Naive thymus-derived CD4-positive, alpha-beta T cell (primary cell): ENCODE measurements at regions of chr1 and their contacts with region 1.

Region 1: DNA sequence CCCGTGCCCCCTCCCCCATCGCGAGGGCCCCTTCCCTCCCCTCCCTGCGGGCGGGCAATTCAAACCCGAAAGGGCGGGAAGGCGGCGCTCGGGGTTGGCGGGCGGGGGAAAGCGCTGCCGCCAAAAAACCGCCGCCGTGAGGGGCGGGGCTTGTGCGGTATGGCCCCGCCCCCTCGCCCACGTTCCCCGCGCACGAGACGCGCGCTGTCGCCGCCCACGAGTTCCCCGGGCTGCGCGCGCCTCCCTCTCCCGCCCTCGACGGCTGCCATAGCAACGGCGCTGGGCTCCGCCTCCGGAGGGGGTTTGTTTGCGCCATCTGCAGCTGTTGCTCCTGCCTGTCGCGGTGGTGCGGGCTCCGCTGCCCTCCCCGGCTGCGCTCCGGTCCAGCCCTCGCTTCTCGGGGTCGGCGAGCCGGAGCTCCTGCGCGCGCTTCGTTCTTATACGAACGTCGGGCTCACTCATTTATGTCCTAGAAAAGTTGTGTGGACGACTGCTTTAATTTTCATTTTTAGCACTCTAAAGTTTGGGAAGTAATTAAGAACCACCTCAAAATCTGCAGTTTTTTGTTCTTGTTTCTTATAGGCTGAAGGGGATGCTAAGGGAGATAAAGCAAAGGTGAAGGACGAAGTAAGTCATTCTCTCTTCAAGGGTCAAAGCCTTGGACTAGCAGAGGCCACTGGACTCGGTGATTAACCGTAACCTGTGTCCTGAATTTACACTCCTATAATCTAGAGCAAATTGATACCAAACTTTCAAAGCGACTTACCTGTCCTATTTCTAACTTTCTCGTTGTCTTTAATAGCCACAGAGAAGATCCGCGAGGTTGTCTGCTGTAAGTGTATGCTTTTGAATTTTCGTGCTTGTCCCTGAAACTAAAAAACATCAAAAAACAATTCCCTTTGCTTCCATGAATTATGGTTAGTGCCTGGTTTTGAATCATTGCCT is 933 bp downstream of the HMGN2 start:
- DNase-seq: peak; percentile 92 to 97 (median 95)
- ATAC-seq: peak; percentile 90
- H3K4me3 ChIP-seq: peak overlapping the region; percentile 72
- H3K4me3 Mint-ChIP-seq: peak overlapping the region; percentile 85 to 100 (median 88)
- H3K27ac ChIP-seq: peak overlapping the region; percentile 100
- H3K27ac Mint-ChIP-seq: peak overlapping the region; percentile 60 to 97 (median 87)
- H3K4me1 ChIP-seq: peaks cover 30 to 35% of the 10 kb centered on the region in 2 donors
- H3K4me1 Mint-ChIP-seq: peaks cover 28 to 62% (median 59%) of the 10 kb centered on the region in 7 donors
- H3K27me3 ChIP-seq: no peaks in the 10 kb centered on the region
- H3K27me3 Mint-ChIP-seq: peaks cover 0 to 2% (median 0%) of the 10 kb centered on the region in 5 donors

Region 2: GRCh38 chr1:25616095-25616986 is 856.8 kb before region 1 on chr1 and contains the start of gene MAN1C1:
- CTCF ChIA-PET with region 1: no interaction called
- POLR2A ChIA-PET with region 1: no interaction called
- intact Hi-C with region 1: loop called in 1 of 2 experiments (anchors 5 kb)
- DNase-seq: peak; percentile 71 to 89 (median 85)
- ATAC-seq: peak; percentile 91
- H3K4me3 ChIP-seq: peak within 1 kb of the TSS; percentile 76
- H3K4me3 Mint-ChIP-seq: peak within 1 kb of the TSS; percentile 78 to 99 (median 86)
- H3K27ac ChIP-seq: peak within 1 kb of the TSS; percentile 84
- H3K27ac Mint-ChIP-seq: peak within 1 kb of the TSS; percentile 67 to 93 (median 86)
- H3K4me1 ChIP-seq: peaks cover 13 to 37% of the 10 kb centered on the region in 2 donors
- H3K4me1 Mint-ChIP-seq: peaks cover 36 to 52% (median 45%) of the 10 kb centered on the region in 7 donors
- H3K27me3 ChIP-seq: no peaks in the 10 kb centered on the region
- H3K27me3 Mint-ChIP-seq: peaks cover 0 to 72% (median 0%) of the 10 kb centered on the region in 5 donors
- total RNA-seq, gene MAN1C1: 28.8 to 85.5 (median 69.9) TPM

Region 3: GRCh38 chr1:26279456-26280332 is 193.5 kb before region 1 on chr1 and contains the start of gene SH3BGRL3:
- CTCF ChIA-PET with region 1: no interaction called
- POLR2A ChIA-PET with region 1: interaction called, 6 read pairs
- intact Hi-C with region 1: loop called (anchors 1 to 2 kb)
- DNase-seq: peak; percentile 73 to 89 (median 84)
- ATAC-seq: peak; percentile 77
- H3K4me3 ChIP-seq: peak within 1 kb of the TSS; percentile 58
- H3K4me3 Mint-ChIP-seq: peak within 1 kb of the TSS; percentile 80 to 98 (median 89)
- H3K27ac ChIP-seq: peak within 1 kb of the TSS; percentile 86
- H3K27ac Mint-ChIP-seq: peak within 1 kb of the TSS; percentile 83 to 99 (median 93)
- H3K4me1 ChIP-seq: peaks cover 80 to 82% of the 10 kb centered on the region in 2 donors
- H3K4me1 Mint-ChIP-seq: peaks cover 60 to 85% (median 71%) of the 10 kb centered on the region in 7 donors
- H3K27me3 ChIP-seq: no peaks in the 10 kb centered on the region
- H3K27me3 Mint-ChIP-seq: no peaks in the 10 kb centered on the region
- total RNA-seq, gene SH3BGRL3: 156 to 636 (median 224) TPM

Region 4: GRCh38 chr1:26378088-26378878 is 94.9 kb before region 1 on chr1:
- CTCF ChIA-PET with region 1: no interaction called
- POLR2A ChIA-PET with region 1: no interaction called
- intact Hi-C with region 1: loop called in 1 of 2 experiments (anchors 5 kb)
- DNase-seq: peak; percentile 47 to 77 (median 70)
- ATAC-seq: peak; percentile 98
- H3K4me3 ChIP-seq: peak overlapping the region; percentile 35
- H3K4me3 Mint-ChIP-seq: peak overlapping the region; percentile 64 to 85 (median 74)
- H3K27ac ChIP-seq: peak overlapping the region; percentile 56
- H3K27ac Mint-ChIP-seq: peak overlapping the region; percentile 48 to 93 (median 92)
- H3K4me1 ChIP-seq: peaks cover 57 to 64% of the 10 kb centered on the region in 2 donors
- H3K4me1 Mint-ChIP-seq: peaks cover 57 to 74% (median 70%) of the 10 kb centered on the region in 7 donors
- H3K27me3 ChIP-seq: no peaks in the 10 kb centered on the region
- H3K27me3 Mint-ChIP-seq: no peaks in the 10 kb centered on the region

Region 5: DNA sequence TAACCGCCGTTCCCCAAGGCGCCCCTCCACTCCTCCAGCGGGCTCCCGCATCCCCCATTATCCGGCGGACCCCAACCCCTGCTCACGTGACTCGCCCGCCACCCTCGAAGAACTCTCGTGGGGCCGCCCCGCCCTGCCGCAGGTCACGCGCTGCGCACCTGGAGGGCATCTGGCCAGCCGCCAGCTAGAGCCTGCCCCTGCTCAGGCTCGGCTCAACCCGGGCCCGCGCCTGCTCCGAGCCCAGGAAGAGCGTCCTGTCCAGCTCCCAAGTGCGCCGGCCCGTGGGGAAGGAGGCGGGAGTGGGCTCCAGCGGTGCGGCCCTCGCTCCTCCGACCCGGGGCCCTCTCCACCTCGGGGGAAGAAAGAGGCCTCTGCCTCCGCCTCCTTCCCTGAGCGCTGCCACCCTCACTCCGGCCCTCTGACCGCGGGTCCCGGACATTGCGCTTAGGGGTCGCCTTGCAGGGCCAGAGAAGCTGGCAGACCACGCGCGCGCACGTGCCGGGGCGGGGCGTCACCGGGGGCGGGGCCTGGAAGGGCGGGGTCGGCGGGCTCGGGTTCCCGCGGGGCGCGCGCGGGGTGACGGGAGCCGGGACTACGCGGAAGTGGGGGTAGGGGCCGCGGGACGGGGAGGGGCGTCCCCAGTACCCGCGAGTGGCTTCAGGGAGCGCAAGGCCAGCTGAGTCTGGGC is 27.5 kb after region 1 on chr1:
- CTCF ChIA-PET with region 1: interaction called, 4 read pairs
- POLR2A ChIA-PET with region 1: interaction called, 40 read pairs
- intact Hi-C with region 1: loop called (anchors 1 kb)
- DNase-seq: peak; percentile 76 to 97 (median 86)
- ATAC-seq: peak; percentile 89
- H3K4me3 ChIP-seq: peak overlapping the region; percentile 95
- H3K4me3 Mint-ChIP-seq: peak overlapping the region; percentile 67 to 91 (median 88)
- H3K27ac ChIP-seq: peak overlapping the region; percentile 90
- H3K27ac Mint-ChIP-seq: peak overlapping the region; percentile 67 to 95 (median 91)
- H3K4me1 ChIP-seq: peaks cover 16% of the 10 kb centered on the region in 2 donors
- H3K4me1 Mint-ChIP-seq: peaks cover 1 to 31% (median 11%) of the 10 kb centered on the region in 7 donors
- H3K27me3 ChIP-seq: no peaks in the 10 kb centered on the region
- H3K27me3 Mint-ChIP-seq: no peaks in the 10 kb centered on the region

Region 6: DNA sequence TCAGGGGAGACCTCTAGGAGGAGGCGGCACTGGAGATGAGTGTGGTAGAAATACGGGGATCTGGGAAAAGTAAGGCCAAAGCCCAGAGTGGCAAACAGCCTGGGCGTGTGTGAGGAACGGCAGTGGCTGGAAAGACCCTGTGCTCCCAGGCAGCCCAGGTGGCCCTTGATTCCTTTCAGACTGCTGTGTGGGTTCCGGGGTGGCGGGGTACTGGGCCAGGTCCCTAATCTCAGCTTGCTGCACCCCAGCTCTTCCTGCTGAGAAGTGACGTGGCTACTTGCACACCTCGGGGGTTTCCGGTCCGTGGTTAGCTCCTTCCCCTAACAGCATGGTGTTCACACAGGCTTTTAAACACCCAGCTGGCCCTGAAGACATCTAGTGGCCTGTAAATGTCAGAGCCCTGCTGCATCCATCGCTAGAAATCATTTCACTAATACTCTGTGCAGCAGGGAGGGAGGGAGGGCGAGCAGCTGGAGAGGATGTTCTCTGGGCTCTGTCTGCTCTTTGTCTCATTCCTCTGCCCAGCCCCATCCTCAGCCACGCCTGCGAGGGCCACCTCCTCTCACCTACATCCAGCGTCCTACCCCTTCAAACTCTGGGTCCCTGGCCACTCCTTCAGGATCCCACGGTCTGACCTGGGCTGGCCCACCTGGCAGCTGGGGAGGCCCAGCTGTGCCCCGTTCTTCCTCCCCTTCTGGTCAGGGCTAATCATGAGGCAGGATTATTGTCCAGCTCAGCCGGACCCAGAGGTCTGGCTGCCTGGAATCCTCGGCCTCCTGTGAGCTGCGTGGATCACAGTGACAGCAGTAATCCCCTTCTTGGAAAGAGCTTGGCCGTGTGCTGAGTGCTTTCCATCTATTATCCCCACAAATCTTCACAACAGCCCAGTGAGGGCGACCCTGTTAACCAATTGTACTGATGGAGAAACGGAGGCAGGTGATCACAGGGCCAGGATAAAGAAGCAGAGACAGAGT is 360.5 kb after region 1 on chr1:
- CTCF ChIA-PET with region 1: no interaction called
- POLR2A ChIA-PET with region 1: interaction called, 3 read pairs
- intact Hi-C with region 1: loop called in 1 of 2 experiments (anchors 2 kb)
- DNase-seq: peak; percentile 59 to 95 (median 88)
- ATAC-seq: peak; percentile 97
- H3K4me3 ChIP-seq: peak overlapping the region; percentile 59
- H3K4me3 Mint-ChIP-seq: peak overlapping the region; percentile 69 to 87 (median 84)
- H3K27ac ChIP-seq: peak overlapping the region; percentile 99
- H3K27ac Mint-ChIP-seq: peak overlapping the region; percentile 95 to 100 (median 99)
- H3K4me1 ChIP-seq: peaks cover 49% of the 10 kb centered on the region in 2 donors
- H3K4me1 Mint-ChIP-seq: peaks cover 50 to 75% (median 64%) of the 10 kb centered on the region in 7 donors
- H3K27me3 ChIP-seq: no peaks in the 10 kb centered on the region
- H3K27me3 Mint-ChIP-seq: no peaks in the 10 kb centered on the region